ENCODE measurements at regions of chr5 and their contacts with region 1.

Region 1: GRCh38 chr5:61071526-61071925 is 90.7 kb downstream of the SMIM15 start:
- DNase-seq: no peak
- H3K4me3 ChIP-seq: no peak overlapping the region
- H3K27ac ChIP-seq: no peak overlapping the region
- H3K4me1 ChIP-seq: no peaks in the 10 kb centered on the region
- H3K27me3 ChIP-seq: no peaks in the 10 kb centered on the region
- CTCF ChIP-seq: no peak
- EP300 ChIP-seq: no peak
- POLR2A ChIP-seq: no peak

Region 2: GRCh38 chr5:61044545-61044944 is 27.0 kb before region 1 on chr5:
- intact Hi-C with region 1: loop called in 1 of 4 experiments (anchors 1 kb)
- DNase-seq: no peak
- H3K4me3 ChIP-seq: no peak overlapping the region
- H3K27ac ChIP-seq: no peak overlapping the region
- H3K4me1 ChIP-seq: no peaks in the 10 kb centered on the region
- H3K27me3 ChIP-seq: no peaks in the 10 kb centered on the region
- CTCF ChIP-seq: no peak
- EP300 ChIP-seq: no peak
- POLR2A ChIP-seq: no peak